Sigmoid colon (tissue), 7 donors: ENCODE measurements at regions of chr16 and their contacts with region 1.

Region 1: DNA sequence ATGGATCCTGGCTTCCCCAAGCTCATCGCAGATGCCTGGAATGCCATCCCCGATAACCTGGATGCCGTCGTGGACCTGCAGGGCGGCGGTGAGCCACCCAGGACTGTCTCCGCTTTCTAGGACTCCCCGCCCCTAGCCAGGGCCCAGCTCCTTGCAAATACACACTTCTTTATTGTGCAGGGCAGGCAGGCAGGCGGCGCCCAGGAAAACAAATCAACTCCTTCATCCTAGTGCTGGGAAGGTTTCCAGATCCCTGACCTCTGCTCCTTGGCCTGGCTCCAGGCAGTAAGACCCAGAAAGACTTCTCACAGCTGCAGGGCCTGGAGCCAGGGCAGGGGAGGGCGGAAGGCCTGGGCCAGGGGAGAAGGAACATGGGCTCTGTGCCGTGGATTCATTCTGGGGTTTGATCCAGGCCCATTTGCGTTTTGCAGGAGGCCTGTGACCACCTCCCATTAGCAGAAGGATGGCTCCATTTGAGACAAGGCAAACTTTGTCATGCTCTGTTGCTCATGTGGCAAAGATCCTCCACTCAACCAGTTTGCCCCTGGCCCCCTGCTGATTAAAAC is 6.0 kb upstream of the LPCAT2 start:
- DNase-seq: peak; percentile 95
- H3K4me3 ChIP-seq: no peak overlapping the region
- H3K27ac ChIP-seq: peak overlapping the region; percentile 37 to 60 (median 48)
- H3K4me1 ChIP-seq: peaks cover 0 to 45% (median 37%) of the 10 kb centered on the region in 4 donors
- H3K27me3 ChIP-seq: no peaks in the 10 kb centered on the region
- CTCF ChIP-seq: no peak
- EP300 ChIP-seq: no peak
- POLR2A ChIP-seq: no peak

Region 2: DNA sequence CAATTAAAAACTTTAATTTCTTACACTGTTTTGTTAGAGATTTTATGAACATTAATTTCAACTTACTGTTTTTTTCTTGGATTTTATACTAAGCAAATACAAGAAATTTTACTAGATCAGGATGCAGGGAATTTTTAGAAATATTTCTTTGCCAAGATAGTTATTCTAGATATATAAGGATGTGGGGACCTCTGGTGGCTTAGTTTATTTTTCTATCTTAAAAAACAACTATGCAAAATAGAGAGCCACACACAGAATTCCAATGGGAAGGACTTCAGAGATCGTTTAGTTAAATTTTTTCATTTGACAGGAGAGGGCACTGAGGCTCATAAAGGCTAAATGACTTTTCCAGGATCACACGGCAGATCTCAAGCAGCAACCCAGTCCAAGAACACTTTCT is 40.6 kb after region 1 on chr16:
- intact Hi-C with region 1: loop called (anchors 5 kb)
- DNase-seq: no peak
- H3K4me3 ChIP-seq: no peak overlapping the region
- H3K27ac ChIP-seq: no peak overlapping the region
- H3K4me1 ChIP-seq: peaks cover 0 to 7% (median 3%) of the 10 kb centered on the region in 4 donors
- H3K27me3 ChIP-seq: no peaks in the 10 kb centered on the region
- CTCF ChIP-seq: peak in 2 of 4 experiments; percentile 21 to 38
- EP300 ChIP-seq: no peak
- POLR2A ChIP-seq: no peak

Region 3: GRCh38 chr16:55728797-55729196 is 225.9 kb after region 1 on chr16:
- intact Hi-C with region 1: no loop called
- DNase-seq: no peak
- H3K4me3 ChIP-seq: no peak overlapping the region
- H3K27ac ChIP-seq: no peak overlapping the region
- H3K4me1 ChIP-seq: no peaks in the 10 kb centered on the region
- H3K27me3 ChIP-seq: no peaks in the 10 kb centered on the region
- CTCF ChIP-seq: no peak
- EP300 ChIP-seq: no peak
- POLR2A ChIP-seq: no peak

Region 4: DNA sequence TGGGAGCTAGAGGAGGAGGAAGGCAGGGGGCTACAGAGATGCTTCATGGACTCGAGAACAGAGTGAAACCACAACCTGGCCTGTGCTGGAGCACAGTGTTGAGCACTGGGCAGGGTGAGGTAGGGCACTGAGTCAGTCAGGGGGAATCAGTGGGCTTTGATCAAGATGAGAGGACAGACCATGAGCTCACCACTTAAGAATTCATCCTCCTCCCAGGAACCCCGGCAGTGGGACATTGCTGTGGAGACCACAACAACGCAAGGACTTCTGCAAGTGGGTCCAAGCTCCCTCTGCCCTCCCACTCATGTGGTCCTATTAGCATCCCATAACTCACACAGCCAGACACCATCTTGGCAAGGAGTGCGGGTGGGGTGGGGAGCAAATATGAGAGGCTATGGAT is 374.0 kb after region 1 on chr16:
- intact Hi-C with region 1: no loop called
- DNase-seq: no peak
- H3K4me3 ChIP-seq: no peak overlapping the region
- H3K27ac ChIP-seq: no peak overlapping the region
- H3K4me1 ChIP-seq: no peaks in the 10 kb centered on the region
- H3K27me3 ChIP-seq: peaks cover 0 to 6% (median 0%) of the 10 kb centered on the region in 3 donors
- CTCF ChIP-seq: no peak
- EP300 ChIP-seq: no peak
- POLR2A ChIP-seq: no peak